ENCODE measurements at regions of chr15 and their contacts with region 1.

Region 1: GRCh38 chr15:90101969-90102890 is at the start of gene IDH2:
- DNase-seq: peak; percentile 67 to 79 (median 73)
- H3K4me3 ChIP-seq: peak within 1 kb of the TSS; percentile 68
- H3K4me3 Mint-ChIP-seq: peak within 1 kb of the TSS; percentile 88 to 98 (median 92)
- H3K27ac ChIP-seq: peak within 1 kb of the TSS; percentile 63
- H3K27ac Mint-ChIP-seq: peak within 1 kb of the TSS; percentile 96 to 100 (median 99)
- H3K4me1 ChIP-seq: peaks cover 44% of the 10 kb centered on the region
- H3K4me1 Mint-ChIP-seq: peaks cover 47 to 57% (median 54%) of the 10 kb centered on the region in 3 donors
- H3K27me3 ChIP-seq: no peaks in the 10 kb centered on the region
- H3K27me3 Mint-ChIP-seq: no peaks in the 10 kb centered on the region
- total RNA-seq, gene IDH2: 72.8 to 73.8 TPM

Region 2: DNA sequence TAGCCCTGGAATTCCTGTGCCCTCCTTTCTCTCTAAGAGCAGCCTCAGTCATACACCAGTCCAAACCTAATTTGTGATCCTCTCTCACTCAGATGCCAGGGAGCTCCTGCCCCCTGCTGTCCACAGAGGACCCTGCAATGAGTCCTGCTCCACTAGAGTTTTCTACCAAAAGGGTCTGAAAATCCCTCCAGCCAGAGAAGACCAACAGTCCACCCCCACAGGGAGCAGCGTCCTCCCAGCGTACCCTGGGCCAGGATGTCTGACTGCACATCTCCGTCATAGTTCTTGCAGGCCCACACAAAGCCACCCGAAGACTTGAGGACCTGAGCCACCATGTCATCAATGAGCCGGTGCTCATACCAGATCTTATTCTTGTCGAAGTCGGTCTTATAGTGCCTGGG is 15.4 kb before region 1 on chr15:
- CTCF ChIA-PET with region 1: interaction called, 11 read pairs
- POLR2A ChIA-PET with region 1: interaction called, 3 read pairs
- DNase-seq: peak in 2 of 5 donors; percentile 18 to 62
- H3K4me3 ChIP-seq: no peak overlapping the region
- H3K4me3 Mint-ChIP-seq: peak overlapping the region in 1 of 7 donors; percentile 45
- H3K27ac ChIP-seq: no peak overlapping the region
- H3K27ac Mint-ChIP-seq: peak overlapping the region; percentile 15 to 86 (median 74)
- H3K4me1 ChIP-seq: no peaks in the 10 kb centered on the region
- H3K4me1 Mint-ChIP-seq: peaks cover 8 to 26% (median 11%) of the 10 kb centered on the region in 3 donors
- H3K27me3 ChIP-seq: no peaks in the 10 kb centered on the region
- H3K27me3 Mint-ChIP-seq: no peaks in the 10 kb centered on the region